Lower lobe of right lung (tissue), 2 donors: ENCODE measurements at regions of chr15 and their contacts with region 1.

Region 1: DNA sequence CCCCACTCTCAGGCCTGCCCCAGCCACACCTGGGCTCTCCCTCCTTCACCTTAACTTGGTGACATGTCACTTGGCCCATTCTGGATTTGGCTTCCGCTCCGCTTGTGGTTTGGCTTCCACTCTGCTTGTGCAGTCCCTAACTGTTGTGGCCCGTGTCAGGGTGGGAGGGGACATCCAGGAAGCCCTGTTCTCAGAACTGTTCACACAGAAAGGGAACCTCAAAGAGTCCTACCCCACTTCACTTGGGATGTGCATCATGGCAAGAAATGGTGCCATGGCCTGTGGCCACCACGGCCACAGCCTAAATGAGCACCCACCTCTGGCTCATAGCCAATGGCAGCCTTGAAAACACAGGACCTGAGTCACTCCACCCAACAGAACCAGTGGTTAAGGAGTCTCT is 63.5 kb downstream of the CYP19A1 start:
- DNase-seq: no peak
- ATAC-seq: no peak
- H3K4me3 ChIP-seq: no peak overlapping the region
- H3K27ac ChIP-seq: no peak overlapping the region
- H3K4me1 ChIP-seq: no peaks in the 10 kb centered on the region
- H3K27me3 ChIP-seq: peaks cover 5% of the 10 kb centered on the region
- CTCF ChIP-seq: no peak

Region 2: DNA sequence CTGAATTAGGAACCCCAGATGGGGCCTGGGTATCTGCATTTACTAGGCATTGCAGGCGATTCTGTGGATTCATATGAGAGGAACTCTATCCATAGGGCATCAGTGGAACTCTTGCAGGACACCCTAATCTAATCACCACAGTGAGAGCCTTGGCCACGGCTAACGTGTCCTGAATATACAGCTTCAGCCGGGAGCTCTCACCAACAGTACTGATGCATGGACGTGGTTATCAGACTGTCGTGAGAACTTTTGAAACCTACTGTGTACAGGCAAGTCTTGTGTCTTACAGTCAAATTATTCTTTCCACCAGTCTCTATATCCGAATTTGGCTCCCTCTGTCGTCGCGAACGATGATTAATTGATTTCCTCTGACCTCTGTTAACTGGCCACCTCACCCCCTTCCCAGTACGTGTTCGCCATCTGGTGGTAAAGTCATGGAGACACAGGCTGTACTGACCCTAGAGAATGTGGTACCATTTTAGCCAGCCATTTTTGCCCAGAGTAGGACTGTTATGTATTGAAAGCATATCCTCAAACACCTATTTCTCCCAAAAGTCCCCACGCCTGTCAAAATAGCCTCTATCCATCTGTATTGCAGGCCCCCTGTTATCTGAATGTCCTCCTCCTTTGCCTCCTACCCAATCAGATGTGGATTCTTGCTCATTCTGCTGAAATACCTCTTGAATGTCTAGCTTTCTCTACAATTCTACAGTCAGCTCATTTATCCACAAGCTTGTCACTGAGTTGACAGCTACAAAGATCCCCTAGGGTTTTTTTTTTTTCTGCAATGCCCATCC is 106.3 kb after region 1 on chr15:
- intact Hi-C with region 1: loop called (anchors 5 kb)
- DNase-seq: no peak
- ATAC-seq: peak; percentile 86 to 90
- H3K4me3 ChIP-seq: no peak overlapping the region
- H3K27ac ChIP-seq: no peak overlapping the region
- H3K4me1 ChIP-seq: peaks cover 5% of the 10 kb centered on the region
- H3K27me3 ChIP-seq: no peaks in the 10 kb centered on the region
- CTCF ChIP-seq: peak; percentile 75